A673 (cell line): ENCODE measurements at regions of chr22 and their contacts with region 1.

Region 1: GRCh38 chr22:35150183-35151107 is 84.5 kb downstream of the ISX start:
- DNase-seq: peak; percentile 61
- H3K4me3 ChIP-seq: no peak overlapping the region
- H3K27ac ChIP-seq: no peak overlapping the region
- H3K4me1 ChIP-seq: no peaks in the 10 kb centered on the region
- H3K27me3 ChIP-seq: peaks cover 3% of the 10 kb centered on the region
- CTCF ChIP-seq: peak; percentile 92

Region 2: GRCh38 chr22:33302049-33302545 is 1848.3 kb before region 1 on chr22:
- CTCF ChIA-PET with region 1: no interaction called
- POLR2A ChIA-PET with region 1: no interaction called
- intact Hi-C with region 1: loop called (anchors 5 kb)
- DNase-seq: peak; percentile 76
- H3K4me3 ChIP-seq: no peak overlapping the region
- H3K27ac ChIP-seq: no peak overlapping the region
- H3K4me1 ChIP-seq: no peaks in the 10 kb centered on the region
- H3K27me3 ChIP-seq: no peaks in the 10 kb centered on the region
- CTCF ChIP-seq: peak; percentile 90

Region 3: DNA sequence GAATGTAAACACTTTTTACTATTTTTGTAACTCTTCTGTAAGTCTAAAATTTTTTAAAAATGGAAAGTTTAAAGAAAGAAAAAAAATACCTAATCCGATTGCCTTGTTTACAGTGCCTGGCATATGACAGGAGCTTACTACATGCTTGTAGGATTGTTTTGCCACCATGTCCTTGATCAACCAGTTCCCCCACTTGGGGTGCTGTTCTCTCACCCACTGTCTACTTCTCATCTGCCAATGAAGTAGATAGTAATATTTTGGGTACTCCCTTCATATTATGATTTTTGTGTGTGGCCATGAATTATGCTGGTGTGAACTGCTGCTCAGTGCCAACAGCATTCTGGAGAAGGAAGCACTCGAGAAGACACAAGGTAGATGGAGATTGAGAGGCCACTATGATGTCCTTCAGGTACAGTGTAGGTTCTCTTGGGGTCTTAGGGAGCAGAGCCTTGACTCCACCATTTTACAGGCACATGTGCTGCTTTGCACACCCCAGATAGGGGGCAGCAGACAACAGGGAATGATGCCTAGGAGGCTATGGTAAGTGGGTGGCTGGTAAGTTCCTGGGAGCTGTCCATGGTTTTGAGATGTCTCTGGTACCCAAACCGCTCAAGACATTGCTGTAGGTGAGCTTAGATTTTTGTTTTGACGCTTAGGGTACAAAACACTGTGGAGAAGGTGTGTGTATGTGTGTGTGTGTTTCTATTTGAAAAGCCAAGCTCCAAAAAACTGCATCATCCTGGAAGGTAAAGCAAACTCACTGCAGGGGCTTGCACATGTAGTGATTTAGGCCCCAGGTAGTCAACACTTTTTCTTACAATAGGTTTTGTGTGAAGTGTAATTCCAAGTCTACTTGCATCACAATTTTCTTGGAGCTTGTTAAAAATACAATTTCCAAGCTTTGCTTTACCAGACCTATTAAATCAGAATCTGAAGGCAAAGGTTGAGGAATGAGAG is 735.7 kb before region 1 on chr22:
- CTCF ChIA-PET with region 1: interaction called, 6 read pairs
- POLR2A ChIA-PET with region 1: no interaction called
- intact Hi-C with region 1: loop called (anchors 10 kb)
- DNase-seq: peak; percentile 68
- H3K4me3 ChIP-seq: no peak overlapping the region
- H3K27ac ChIP-seq: no peak overlapping the region
- H3K4me1 ChIP-seq: no peaks in the 10 kb centered on the region
- H3K27me3 ChIP-seq: no peaks in the 10 kb centered on the region
- CTCF ChIP-seq: peak; percentile 63

Region 4: GRCh38 chr22:35103761-35104160 is 46.7 kb before region 1 on chr22:
- CTCF ChIA-PET with region 1: no interaction called
- POLR2A ChIA-PET with region 1: no interaction called
- intact Hi-C with region 1: no loop called
- DNase-seq: no peak
- H3K4me3 ChIP-seq: no peak overlapping the region
- H3K27ac ChIP-seq: no peak overlapping the region
- H3K4me1 ChIP-seq: no peaks in the 10 kb centered on the region
- H3K27me3 ChIP-seq: peaks cover 14% of the 10 kb centered on the region
- CTCF ChIP-seq: no peak

Region 5: DNA sequence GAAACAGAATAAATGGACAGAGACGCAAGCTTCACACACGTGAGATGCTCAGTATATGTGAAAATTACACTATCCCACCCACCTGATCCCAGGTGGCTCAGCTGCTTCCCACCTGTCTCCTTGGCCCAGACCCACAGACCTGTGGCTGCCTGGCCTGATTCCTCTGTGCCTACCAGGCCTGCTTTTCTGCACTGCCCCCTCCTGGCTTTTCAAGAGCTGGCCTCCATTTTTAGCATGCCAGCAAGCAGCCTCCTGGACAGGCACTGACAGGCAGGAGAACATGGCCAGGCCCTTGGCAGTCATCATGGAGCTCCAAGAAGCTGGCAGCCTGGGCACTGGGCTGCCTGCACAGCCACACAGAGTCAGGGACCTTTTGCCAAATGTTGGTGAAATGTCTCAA is 27.4 kb after region 1 on chr22:
- CTCF ChIA-PET with region 1: no interaction called
- POLR2A ChIA-PET with region 1: no interaction called
- intact Hi-C with region 1: no loop called
- DNase-seq: no peak
- H3K4me3 ChIP-seq: no peak overlapping the region
- H3K27ac ChIP-seq: no peak overlapping the region
- H3K4me1 ChIP-seq: no peaks in the 10 kb centered on the region
- H3K27me3 ChIP-seq: no peaks in the 10 kb centered on the region
- CTCF ChIP-seq: peak; percentile 28; the same call in 1 of the 2 replicates

Region 6: GRCh38 chr22:35231585-35232084 is 81.2 kb after region 1 on chr22:
- CTCF ChIA-PET with region 1: interaction called, 12 read pairs
- POLR2A ChIA-PET with region 1: no interaction called
- intact Hi-C with region 1: loop called (anchors 2 kb)
- DNase-seq: peak; percentile 79
- H3K4me3 ChIP-seq: no peak overlapping the region
- H3K27ac ChIP-seq: no peak overlapping the region
- H3K4me1 ChIP-seq: peaks cover 4% of the 10 kb centered on the region
- H3K27me3 ChIP-seq: peaks cover 27% of the 10 kb centered on the region
- CTCF ChIP-seq: peak; percentile 98